ENCODE measurements at regions of chr1 and their contacts with region 1.

Region 1: DNA sequence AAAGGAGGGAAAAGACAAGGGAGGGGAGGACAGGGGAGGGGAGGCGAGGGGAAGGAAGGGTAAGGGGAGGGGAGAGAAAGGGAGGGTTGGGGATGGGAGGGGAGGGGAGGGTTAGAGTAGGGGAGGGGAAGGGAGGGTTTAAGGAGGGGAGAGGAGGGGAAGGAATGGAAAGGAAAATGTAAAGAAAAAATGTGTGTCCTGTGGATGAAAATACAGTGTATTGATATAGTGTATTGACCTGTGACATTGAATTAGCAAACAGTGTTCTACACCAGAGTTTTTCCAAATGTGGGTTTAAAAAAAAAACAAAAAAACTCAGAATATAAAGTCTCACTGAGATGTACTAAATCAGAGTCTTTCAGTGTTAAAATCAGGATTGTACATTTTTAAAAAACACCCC is 1279.8 kb upstream of the ADGRL2 start:
- DNase-seq: no peak
- H3K4me3 ChIP-seq: no peak overlapping the region
- H3K27ac ChIP-seq: no peak overlapping the region
- H3K4me1 ChIP-seq: no peaks in the 10 kb centered on the region
- H3K27me3 ChIP-seq: no peaks in the 10 kb centered on the region
- CTCF ChIP-seq: no peak

Region 2: DNA sequence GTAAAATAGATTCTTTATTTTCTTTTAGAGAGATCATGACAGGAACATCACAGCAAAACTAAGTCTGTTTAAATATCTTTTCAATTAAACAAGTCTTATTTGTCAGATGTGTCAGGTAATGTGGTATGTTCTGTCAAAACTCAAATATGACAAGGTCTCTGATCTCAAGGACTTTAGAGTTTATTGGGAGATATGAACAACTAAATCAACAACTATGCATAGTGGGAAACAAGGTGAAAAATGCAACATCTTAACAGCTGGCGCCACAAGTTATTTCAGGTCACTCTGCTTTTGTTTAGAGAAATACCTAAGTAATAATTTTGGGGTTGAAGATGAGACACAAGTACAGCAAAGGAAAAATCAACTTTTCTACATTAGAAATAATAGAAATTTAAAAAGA is 735.0 kb before region 1 on chr1:
- CTCF ChIA-PET with region 1: no interaction called
- POLR2A ChIA-PET with region 1: interaction called, 20 read pairs
- intact Hi-C with region 1: no loop called
- DNase-seq: no peak
- H3K4me3 ChIP-seq: no peak overlapping the region
- H3K27ac ChIP-seq: no peak overlapping the region
- H3K4me1 ChIP-seq: no peaks in the 10 kb centered on the region
- H3K27me3 ChIP-seq: no peaks in the 10 kb centered on the region
- CTCF ChIP-seq: no peak

Region 3: DNA sequence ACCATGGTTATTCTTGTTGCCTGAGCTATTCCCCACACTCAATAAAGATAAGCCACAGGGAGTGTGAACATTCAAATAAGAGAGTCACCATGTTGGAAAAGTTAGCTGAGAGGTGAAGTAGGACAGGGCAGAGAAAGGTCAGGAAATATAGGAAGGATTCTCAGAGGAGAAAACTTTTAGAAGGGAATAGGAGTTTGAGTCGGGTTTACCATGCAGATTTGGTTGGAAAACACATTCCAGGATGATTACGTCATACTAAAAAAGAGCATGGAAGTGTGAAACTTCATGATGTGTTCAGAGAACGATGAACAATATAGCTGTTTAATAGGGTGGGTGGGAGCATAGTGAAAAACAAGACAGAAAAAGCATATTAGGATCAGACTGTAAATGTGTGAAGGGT is 154.5 kb after region 1 on chr1:
- CTCF ChIA-PET with region 1: no interaction called
- POLR2A ChIA-PET with region 1: no interaction called
- intact Hi-C with region 1: no loop called
- DNase-seq: no peak
- H3K4me3 ChIP-seq: no peak overlapping the region
- H3K27ac ChIP-seq: no peak overlapping the region
- H3K4me1 ChIP-seq: no peaks in the 10 kb centered on the region
- H3K27me3 ChIP-seq: no peaks in the 10 kb centered on the region
- CTCF ChIP-seq: no peak

Region 4: GRCh38 chr1:81695741-81696140 is 1174.8 kb after region 1 on chr1:
- CTCF ChIA-PET with region 1: no interaction called
- POLR2A ChIA-PET with region 1: no interaction called
- intact Hi-C with region 1: no loop called
- DNase-seq: no peak
- H3K4me3 ChIP-seq: no peak overlapping the region
- H3K27ac ChIP-seq: no peak overlapping the region
- H3K4me1 ChIP-seq: peaks cover 35% of the 10 kb centered on the region
- H3K27me3 ChIP-seq: no peaks in the 10 kb centered on the region
- CTCF ChIP-seq: no peak

Measured in PC-9 (cell line).